HepG2 (cell line): ENCODE measurements at regions of chr20 and their contacts with region 1.

Region 1: DNA sequence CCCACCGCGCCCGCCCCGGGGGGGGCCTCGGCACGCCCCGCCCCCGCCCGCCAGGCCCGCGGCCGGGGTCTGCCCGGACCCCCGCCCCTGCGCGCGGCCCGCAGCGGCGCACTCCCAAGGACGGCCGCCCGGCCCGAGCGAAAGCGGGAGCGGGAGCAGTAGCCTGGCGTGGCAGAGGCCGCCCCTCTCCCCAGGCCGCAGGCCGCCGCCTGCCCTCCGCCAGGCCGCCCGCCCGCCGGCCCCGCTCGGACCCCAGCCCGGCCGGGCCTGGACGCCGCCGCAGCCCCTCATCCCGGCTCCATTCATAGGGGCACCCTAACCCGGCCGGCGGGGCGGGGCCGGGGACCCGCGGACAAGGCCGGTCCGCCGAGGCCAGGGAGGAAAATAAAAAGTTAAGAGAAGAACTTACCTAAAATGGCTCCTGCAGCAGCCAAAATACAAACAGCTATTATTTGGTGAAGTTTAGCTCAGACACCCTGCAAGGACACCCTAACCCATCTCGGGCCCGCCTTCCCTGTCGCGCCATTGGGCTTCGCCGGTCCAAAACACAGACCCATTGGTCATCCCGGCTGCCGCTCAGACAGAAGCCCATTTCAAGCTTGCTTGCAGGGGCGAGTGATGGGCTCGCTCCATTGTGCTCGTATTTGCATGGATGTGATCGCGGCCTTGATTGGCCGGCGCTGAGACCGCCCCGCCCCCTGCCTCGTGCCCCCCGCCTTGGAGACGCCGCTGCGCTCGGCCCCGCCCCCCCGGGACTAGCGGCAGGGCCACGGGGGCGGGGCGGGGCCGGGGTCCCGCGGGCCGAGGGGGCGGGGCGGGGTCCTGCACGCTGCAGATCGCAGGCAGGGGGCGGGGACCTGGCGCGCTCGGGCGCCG is at the start of gene CHD6:
- DNase-seq: peak; percentile 100
- ATAC-seq: peak; percentile 98
- H3K4me3 ChIP-seq: peak within 1 kb of the TSS; percentile 87 to 99 (median 96)
- H3K27ac ChIP-seq: peak within 1 kb of the TSS; percentile 85
- H3K4me1 ChIP-seq: peaks cover 45% of the 10 kb centered on the region
- H3K27me3 ChIP-seq: no peaks in the 10 kb centered on the region; a peak in 1 of 5 replicates
- CTCF ChIP-seq: no peak
- EP300 ChIP-seq: no peak
- POLR2A ChIP-seq: peak; percentile 61 to 77; a peak in 3 of 4 replicates
- RAD21 ChIP-seq: peak; percentile 61; the same call in 1 of the 2 replicates
- total RNA-seq, gene CHD6: 33.9 and 52.0 TPM in 2 replicates

Region 2: DNA sequence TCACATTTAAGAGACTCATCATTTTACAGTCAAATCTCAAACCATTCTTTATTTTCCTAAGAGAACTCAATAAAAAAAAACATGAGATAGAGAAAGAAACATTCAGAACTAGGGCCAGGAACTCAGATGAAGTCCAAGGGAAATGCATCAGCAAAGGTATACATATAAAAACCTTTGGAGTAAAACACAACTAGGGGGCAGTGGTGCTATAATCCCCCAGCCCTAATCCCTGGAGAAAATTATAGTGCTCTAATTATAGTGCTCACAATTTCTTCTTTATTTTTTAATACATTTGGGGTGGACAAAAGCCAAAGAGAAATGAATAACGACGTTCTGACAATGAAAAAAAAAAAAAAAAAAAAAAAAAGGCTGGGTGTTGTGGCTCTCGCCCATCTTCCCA is 150.9 kb before region 1 on chr20:
- CTCF ChIA-PET with region 1: no interaction called
- POLR2A ChIA-PET with region 1: no interaction called
- in situ Hi-C with region 1: no loop called
- intact Hi-C with region 1: loop called (anchors 5 kb)
- DNase-seq: no peak
- ATAC-seq: peak; percentile 47; the same call in 1 of the 3 replicates
- H3K4me3 ChIP-seq: no peak overlapping the region
- H3K27ac ChIP-seq: no peak overlapping the region
- H3K4me1 ChIP-seq: no peaks in the 10 kb centered on the region
- H3K27me3 ChIP-seq: no peaks in the 10 kb centered on the region
- CTCF ChIP-seq: peak; percentile 26
- EP300 ChIP-seq: no peak
- POLR2A ChIP-seq: no peak
- RAD21 ChIP-seq: no peak

Region 3: GRCh38 chr20:41499961-41500725 is 118.0 kb before region 1 on chr20:
- CTCF ChIA-PET with region 1: no interaction called
- POLR2A ChIA-PET with region 1: interaction called, 12 read pairs
- in situ Hi-C with region 1: no loop called
- intact Hi-C with region 1: loop called (anchors 1 kb)
- DNase-seq: no peak
- ATAC-seq: no peak
- H3K4me3 ChIP-seq: no peak overlapping the region
- H3K27ac ChIP-seq: no peak overlapping the region
- H3K4me1 ChIP-seq: peaks cover 55% of the 10 kb centered on the region
- H3K27me3 ChIP-seq: no peaks in the 10 kb centered on the region
- CTCF ChIP-seq: no peak
- EP300 ChIP-seq: no peak
- POLR2A ChIP-seq: no peak
- RAD21 ChIP-seq: no peak

Region 4: GRCh38 chr20:41534842-41535241 is 83.3 kb before region 1 on chr20:
- CTCF ChIA-PET with region 1: no interaction called
- POLR2A ChIA-PET with region 1: interaction called, 14 read pairs
- in situ Hi-C with region 1: no loop called
- intact Hi-C with region 1: loop called (anchors 1 kb)
- DNase-seq: no peak
- ATAC-seq: no peak
- H3K4me3 ChIP-seq: no peak overlapping the region
- H3K27ac ChIP-seq: no peak overlapping the region
- H3K4me1 ChIP-seq: peaks cover 72% of the 10 kb centered on the region
- H3K27me3 ChIP-seq: no peaks in the 10 kb centered on the region
- CTCF ChIP-seq: no peak
- EP300 ChIP-seq: no peak
- POLR2A ChIP-seq: no peak
- RAD21 ChIP-seq: no peak

Region 5: GRCh38 chr20:41577129-41578009 is 40.8 kb before region 1 on chr20:
- CTCF ChIA-PET with region 1: no interaction called
- POLR2A ChIA-PET with region 1: interaction called, 10 read pairs
- in situ Hi-C with region 1: no loop called
- intact Hi-C with region 1: loop called (anchors 5 kb)
- DNase-seq: peak; percentile 93
- ATAC-seq: peak; percentile 91
- H3K4me3 ChIP-seq: peak overlapping the region; percentile 19 to 32 (median 32); a peak in 5 of 6 replicates
- H3K27ac ChIP-seq: peak overlapping the region; percentile 56
- H3K4me1 ChIP-seq: peaks cover 73% of the 10 kb centered on the region
- H3K27me3 ChIP-seq: no peaks in the 10 kb centered on the region
- CTCF ChIP-seq: no peak
- EP300 ChIP-seq: peak in 1 of 2 experiments; percentile 60; a peak in 2 of 4 replicates
- POLR2A ChIP-seq: no peak
- RAD21 ChIP-seq: 0 out of 2 replicates have a peak, but pooled peaks have one; percentile 18

Region 6: DNA sequence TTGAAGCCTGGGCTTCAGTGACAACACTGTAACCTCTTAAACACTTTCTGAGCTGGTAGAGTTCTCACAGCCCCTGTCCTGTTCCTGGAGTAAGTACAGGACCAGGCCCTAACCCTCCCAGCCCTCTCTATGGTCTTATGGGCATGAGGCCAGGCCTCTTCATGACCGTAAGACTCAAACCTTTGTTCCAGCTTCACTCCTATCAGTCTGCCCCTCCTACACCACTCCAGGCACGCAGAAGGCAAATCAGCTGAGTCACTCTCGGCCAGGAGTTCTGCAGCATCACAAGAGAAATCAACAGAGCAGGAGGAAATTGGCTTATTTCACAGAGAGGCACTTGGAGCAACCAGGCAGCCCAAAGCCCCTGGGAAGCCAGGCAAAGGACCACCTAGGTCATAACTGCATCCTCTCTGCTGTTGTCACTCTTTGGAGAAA is 25.4 kb after region 1 on chr20:
- CTCF ChIA-PET with region 1: no interaction called
- POLR2A ChIA-PET with region 1: interaction called, 13 read pairs
- in situ Hi-C with region 1: no loop called
- intact Hi-C with region 1: no loop called
- DNase-seq: peak; percentile 93
- ATAC-seq: peak; percentile 96
- H3K4me3 ChIP-seq: peak overlapping the region in 1 of 3 experiments; percentile 10; a peak in 1 of 6 replicates
- H3K27ac ChIP-seq: no peak overlapping the region
- H3K4me1 ChIP-seq: peaks cover 22% of the 10 kb centered on the region
- H3K27me3 ChIP-seq: peaks cover 1 to 3% of the 10 kb centered on the region in 2 experiments; a peak in 1 of 5 replicates
- CTCF ChIP-seq: no peak
- EP300 ChIP-seq: 0 out of 4 replicates have a peak, but pooled peaks of 1 of the 2 experiments have one; percentile 32
- POLR2A ChIP-seq: no peak
- RAD21 ChIP-seq: no peak

Region 7: GRCh38 chr20:41693136-41693979 is 75.2 kb after region 1 on chr20:
- CTCF ChIA-PET with region 1: no interaction called
- POLR2A ChIA-PET with region 1: interaction called, 29 read pairs
- in situ Hi-C with region 1: no loop called
- intact Hi-C with region 1: loop called (anchors 2 kb)
- DNase-seq: peak; percentile 95
- ATAC-seq: peak; percentile 96
- H3K4me3 ChIP-seq: peak overlapping the region; percentile 67 to 85 (median 73)
- H3K27ac ChIP-seq: peak overlapping the region; percentile 80
- H3K4me1 ChIP-seq: peaks cover 16% of the 10 kb centered on the region
- H3K27me3 ChIP-seq: peaks cover 0 to 9% of the 10 kb centered on the region in 2 experiments; a peak in 2 of 5 replicates
- CTCF ChIP-seq: peak; percentile 72
- EP300 ChIP-seq: no peak
- POLR2A ChIP-seq: peak; percentile 86 to 91
- RAD21 ChIP-seq: peak; percentile 63

Region 8: DNA sequence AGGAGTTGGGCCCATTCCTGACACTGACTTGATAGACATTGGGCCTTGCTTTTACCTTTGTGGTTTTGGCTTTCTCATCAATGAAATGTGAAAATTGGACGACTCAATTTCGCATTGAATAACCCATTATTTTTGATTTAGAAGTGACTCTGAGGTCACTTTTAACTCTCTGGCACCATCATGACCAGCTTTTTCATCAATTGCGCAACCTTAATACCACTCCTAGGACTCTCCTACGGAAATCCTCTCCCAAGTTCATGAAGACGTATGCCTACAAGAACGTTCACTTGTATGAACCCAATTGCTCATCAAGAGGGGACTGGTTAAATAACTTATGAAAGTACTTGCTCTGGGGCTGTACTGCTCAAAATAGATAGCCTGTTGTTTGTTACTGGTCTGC is 86.7 kb after region 1 on chr20:
- CTCF ChIA-PET with region 1: no interaction called
- POLR2A ChIA-PET with region 1: no interaction called
- in situ Hi-C with region 1: no loop called
- intact Hi-C with region 1: no loop called
- DNase-seq: no peak
- ATAC-seq: no peak
- H3K4me3 ChIP-seq: no peak overlapping the region
- H3K27ac ChIP-seq: no peak overlapping the region
- H3K4me1 ChIP-seq: no peaks in the 10 kb centered on the region
- H3K27me3 ChIP-seq: peaks cover 0 to 6% of the 10 kb centered on the region in 2 experiments; a peak in 1 of 5 replicates
- CTCF ChIP-seq: no peak
- EP300 ChIP-seq: no peak
- POLR2A ChIP-seq: no peak
- RAD21 ChIP-seq: no peak